Mammary epithelial cell (primary cell): ENCODE measurements at regions of chr19 and their contacts with region 1.

Region 1: DNA sequence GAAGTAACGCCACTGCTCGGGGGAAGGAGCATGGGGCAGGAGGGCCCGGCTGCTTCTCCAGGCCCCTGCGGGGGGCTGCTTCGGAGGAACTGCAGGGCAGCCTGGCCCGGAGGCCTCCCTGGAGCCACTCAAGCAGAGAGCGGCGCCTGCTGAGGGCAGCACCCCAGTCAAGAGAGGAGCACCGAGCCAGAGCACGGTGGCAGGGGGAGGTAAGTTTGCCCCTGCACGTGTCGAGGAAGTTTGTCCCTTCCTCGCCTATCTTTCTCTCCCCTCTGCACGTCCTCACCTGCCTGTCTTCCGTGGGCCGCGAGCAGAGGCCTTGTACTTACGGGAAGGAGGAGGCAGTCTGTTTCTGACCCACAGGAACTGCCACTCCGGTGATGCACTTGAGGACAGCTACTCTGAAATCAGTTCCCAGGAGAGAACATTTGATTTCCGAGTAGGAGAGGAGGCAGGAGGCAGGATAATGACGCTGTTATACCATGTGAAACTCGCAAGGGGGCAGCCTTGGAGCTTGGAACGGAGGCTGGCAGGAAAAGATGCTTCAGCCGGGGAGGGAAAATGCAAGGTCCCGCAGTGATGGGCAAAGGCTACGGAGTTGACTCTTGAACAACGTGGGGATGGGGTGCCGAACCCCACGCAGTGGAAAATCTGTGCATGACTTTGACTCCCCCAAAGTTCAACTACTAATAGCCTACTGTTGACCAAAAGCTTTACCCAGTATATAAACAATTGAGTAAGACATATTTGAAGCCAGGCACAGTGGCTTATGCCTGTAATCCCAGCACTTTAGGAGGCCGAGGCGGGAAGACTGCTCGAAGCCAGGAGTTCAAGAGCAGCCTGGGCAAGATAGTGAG is 5.0 kb downstream of the FFAR1 start:
- DNase-seq: peak; percentile 44
- H3K4me3 ChIP-seq: no peak overlapping the region
- H3K27ac ChIP-seq: no peak overlapping the region
- H3K4me1 ChIP-seq: no peaks in the 10 kb centered on the region
- H3K27me3 ChIP-seq: no peaks in the 10 kb centered on the region
- CTCF ChIP-seq: peak; percentile 88 to 89

Region 2: DNA sequence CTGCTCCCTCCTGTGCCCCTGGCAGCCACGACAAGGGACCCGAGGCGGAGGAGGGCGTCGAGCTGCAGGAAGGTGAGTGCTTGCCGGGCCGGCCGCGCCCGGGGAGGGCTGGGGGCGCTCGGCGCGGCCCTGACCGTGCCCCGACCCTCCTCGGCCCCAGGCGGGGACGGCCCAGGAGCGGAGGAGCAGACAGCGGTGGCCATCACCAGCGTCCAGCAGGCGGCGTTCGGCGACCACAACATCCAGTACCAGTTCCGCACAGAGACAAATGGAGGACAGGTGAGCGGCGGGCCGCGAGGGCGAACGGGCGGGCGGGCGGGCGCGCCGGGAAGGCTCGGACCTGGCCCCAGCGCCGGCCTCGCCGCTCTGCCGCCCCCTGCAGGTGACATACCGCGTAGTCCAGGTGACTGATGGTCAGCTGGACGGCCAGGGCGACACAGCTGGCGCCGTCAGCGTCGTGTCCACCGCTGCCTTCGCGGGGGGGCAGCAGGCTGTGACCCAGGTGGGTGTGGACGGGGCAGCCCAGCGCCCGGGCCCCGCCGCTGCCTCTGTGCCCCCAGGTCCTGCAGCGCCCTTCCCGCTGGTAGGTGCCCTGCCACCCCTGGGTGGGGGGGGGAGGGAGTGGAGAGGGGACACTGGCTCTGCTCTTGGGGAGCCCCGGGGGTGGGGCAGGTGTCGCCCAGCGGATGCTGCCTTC is 83.1 kb before region 1 on chr19:
- CTCF ChIA-PET with region 1: no interaction called
- dilution Hi-C with region 1: no loop called
- in situ Hi-C with region 1: no loop called
- intact Hi-C with region 1: loop called (anchors 1 kb)
- DNase-seq: peak; percentile 70
- H3K4me3 ChIP-seq: peak overlapping the region; percentile 15 to 72 (median 62)
- H3K27ac ChIP-seq: no peak overlapping the region
- H3K4me1 ChIP-seq: peaks cover 37% of the 10 kb centered on the region
- H3K27me3 ChIP-seq: no peaks in the 10 kb centered on the region
- CTCF ChIP-seq: peak; percentile 26 to 61

Region 3: DNA sequence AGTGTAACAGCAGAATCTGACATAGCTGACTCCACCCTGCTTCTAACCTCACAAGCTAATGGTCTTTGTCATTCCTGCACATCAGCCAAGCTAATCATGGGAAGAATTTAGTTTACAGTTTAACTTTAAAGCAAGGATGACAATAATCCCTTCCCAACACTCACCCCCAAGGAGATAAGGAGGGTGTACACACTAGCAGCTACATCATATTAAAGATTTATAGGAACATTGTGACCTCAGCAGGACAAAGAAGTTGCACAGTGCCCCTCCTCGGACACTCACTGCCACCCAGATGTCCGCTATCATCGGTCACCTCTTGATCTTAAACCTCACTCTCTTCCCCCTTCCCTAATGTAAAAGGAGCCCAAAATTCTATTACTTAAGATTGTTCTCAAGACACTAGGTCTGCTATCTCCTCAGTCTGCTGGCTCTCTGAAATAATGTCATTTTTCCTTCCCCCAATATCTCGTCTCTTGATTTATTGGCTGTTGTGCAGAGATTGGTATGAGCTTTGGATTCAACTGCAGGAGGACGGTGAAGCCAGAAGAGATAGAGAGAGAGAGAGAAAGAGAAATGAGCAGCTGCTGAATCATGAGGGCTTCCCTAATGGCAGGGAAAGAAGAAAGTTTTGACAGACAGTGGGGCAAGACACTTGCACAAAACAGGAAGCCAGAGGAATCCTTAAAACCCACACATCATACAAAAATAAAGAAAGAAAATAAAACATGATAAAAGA is 77.9 kb after region 1 on chr19:
- CTCF ChIA-PET with region 1: no interaction called
- dilution Hi-C with region 1: loop called (anchors 5 kb)
- in situ Hi-C with region 1: no loop called
- intact Hi-C with region 1: no loop called
- DNase-seq: no peak
- H3K4me3 ChIP-seq: no peak overlapping the region
- H3K27ac ChIP-seq: no peak overlapping the region
- H3K4me1 ChIP-seq: no peaks in the 10 kb centered on the region
- H3K27me3 ChIP-seq: no peaks in the 10 kb centered on the region
- CTCF ChIP-seq: no peak

Region 4: DNA sequence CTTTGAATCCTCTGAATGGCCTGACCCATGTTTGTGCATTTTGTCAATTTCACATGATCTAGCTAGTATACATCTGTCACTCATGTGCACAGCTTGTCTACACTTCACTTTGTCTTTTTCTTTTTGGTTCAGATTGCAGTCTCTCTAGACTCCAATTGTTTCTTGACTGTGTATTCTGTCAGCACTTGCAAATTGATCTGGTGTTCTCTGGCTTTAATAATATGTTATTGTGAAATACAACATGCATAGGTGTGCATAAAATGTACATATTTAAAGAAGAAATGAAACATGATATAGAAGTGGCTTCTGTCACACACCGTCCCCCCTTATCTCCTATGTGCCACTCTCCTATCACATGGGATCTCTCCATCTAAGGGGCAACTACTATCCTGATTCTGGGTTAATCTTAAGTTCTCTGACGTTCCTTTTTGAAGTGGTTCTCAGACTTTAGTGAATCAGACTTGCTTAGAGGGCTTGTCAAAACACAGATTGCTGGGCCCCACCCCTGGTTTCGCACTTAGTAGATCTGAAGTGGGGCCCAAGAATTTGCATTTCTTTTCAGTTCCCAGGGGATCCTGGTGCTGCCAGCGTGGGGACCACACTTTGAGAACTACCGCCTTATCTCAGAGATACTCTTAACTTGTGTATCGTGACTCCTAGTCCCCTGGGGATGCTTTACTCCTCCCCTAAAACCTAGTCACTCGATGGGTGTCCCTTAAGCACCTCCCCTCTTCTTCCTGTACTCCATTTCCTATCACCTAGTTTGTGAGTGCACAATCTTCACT is 131.8 kb after region 1 on chr19:
- CTCF ChIA-PET with region 1: no interaction called
- dilution Hi-C with region 1: loop called (anchors 5 kb)
- in situ Hi-C with region 1: no loop called
- intact Hi-C with region 1: no loop called
- DNase-seq: no peak
- H3K4me3 ChIP-seq: no peak overlapping the region
- H3K27ac ChIP-seq: no peak overlapping the region
- H3K4me1 ChIP-seq: no peaks in the 10 kb centered on the region
- H3K27me3 ChIP-seq: no peaks in the 10 kb centered on the region
- CTCF ChIP-seq: no peak

Region 5: GRCh38 chr19:35545001-35545911 is 192.6 kb after region 1 on chr19 and contains the start of gene TMEM147:
- CTCF ChIA-PET with region 1: no interaction called
- dilution Hi-C with region 1: no loop called
- in situ Hi-C with region 1: no loop called
- intact Hi-C with region 1: loop called (anchors 2 kb)
- DNase-seq: peak; percentile 84
- H3K4me3 ChIP-seq: peak within 1 kb of the TSS; percentile 88 to 90 (median 89)
- H3K27ac ChIP-seq: peak within 1 kb of the TSS; percentile 84
- H3K4me1 ChIP-seq: peaks cover 7% of the 10 kb centered on the region
- H3K27me3 ChIP-seq: no peaks in the 10 kb centered on the region
- CTCF ChIP-seq: no peak
- total RNA-seq, gene TMEM147: 79.4 to 99.0 TPM

Region 6: GRCh38 chr19:35592226-35592625 is 239.6 kb after region 1 on chr19:
- CTCF ChIA-PET with region 1: no interaction called
- dilution Hi-C with region 1: no loop called
- in situ Hi-C with region 1: no loop called
- intact Hi-C with region 1: loop called (anchors 2 kb)
- DNase-seq: peak; percentile 24
- H3K4me3 ChIP-seq: no peak overlapping the region
- H3K27ac ChIP-seq: no peak overlapping the region
- H3K4me1 ChIP-seq: no peaks in the 10 kb centered on the region
- H3K27me3 ChIP-seq: no peaks in the 10 kb centered on the region
- CTCF ChIP-seq: peak; percentile 39 to 76